ENCODE measurements at regions of chr5 and their contacts with region 1.

Region 1: DNA sequence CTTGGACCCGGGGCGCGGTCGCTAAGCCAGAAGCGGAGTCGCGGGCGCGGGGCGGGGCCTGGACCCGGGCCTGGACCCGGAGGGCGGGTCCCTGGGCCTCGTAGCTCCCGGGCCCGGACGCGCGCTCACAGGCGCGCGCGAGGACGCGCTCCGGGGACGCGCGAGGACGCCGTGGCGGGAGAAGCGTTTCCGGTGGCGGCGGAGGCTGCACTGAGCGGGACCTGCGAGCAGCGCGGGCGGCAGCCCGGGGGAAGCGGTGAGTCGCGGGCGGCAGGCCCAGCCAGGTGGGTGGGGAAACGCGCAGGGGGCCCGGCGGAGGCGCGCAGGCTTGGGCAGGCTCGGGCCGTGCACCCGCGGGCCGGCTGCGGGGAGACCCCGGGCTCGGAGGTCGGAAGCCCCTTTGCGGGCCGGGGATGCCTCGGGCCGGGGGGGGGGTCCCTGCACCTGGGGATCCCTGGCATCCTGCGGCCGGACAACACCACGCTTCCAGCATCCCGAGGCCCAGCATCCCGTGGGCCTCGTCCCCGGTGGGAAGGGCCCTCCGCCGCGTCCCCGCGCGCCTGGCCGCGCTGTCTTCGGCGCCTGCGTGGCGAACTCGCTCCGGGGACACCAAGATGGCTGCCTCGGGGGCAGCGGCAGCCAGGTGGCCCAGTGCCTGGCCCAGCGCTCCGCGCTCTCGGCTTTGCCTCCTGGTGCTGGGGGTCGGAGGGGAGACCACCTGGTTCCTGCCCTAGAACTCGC is at the start of gene SFXN1:
- DNase-seq: peak; percentile 70
- H3K4me3 ChIP-seq: peak within 1 kb of the TSS; percentile 51 to 81 (median 80)
- H3K27ac ChIP-seq: peak within 1 kb of the TSS; percentile 6
- H3K4me1 ChIP-seq: peaks cover 17% of the 10 kb centered on the region
- H3K27me3 ChIP-seq: peaks cover 0 to 3% of the 10 kb centered on the region in 2 experiments
- CTCF ChIP-seq: no peak
- POLR2A ChIP-seq: peak; percentile 61
- total RNA-seq, gene SFXN1: 69.3 and 77.3 TPM in 2 replicates

Region 2: GRCh38 chr5:174935854-174936474 is 542.6 kb before region 1 on chr5:
- CTCF ChIA-PET with region 1: no interaction called
- POLR2A ChIA-PET with region 1: no interaction called
- dilution Hi-C with region 1: no loop called
- intact Hi-C with region 1: no loop called
- DNase-seq: peak; percentile 14
- H3K4me3 ChIP-seq: no peak overlapping the region
- H3K27ac ChIP-seq: no peak overlapping the region
- H3K4me1 ChIP-seq: no peaks in the 10 kb centered on the region
- H3K27me3 ChIP-seq: no peaks in the 10 kb centered on the region
- CTCF ChIP-seq: peak; percentile 78 to 86
- POLR2A ChIP-seq: no peak

Region 3: DNA sequence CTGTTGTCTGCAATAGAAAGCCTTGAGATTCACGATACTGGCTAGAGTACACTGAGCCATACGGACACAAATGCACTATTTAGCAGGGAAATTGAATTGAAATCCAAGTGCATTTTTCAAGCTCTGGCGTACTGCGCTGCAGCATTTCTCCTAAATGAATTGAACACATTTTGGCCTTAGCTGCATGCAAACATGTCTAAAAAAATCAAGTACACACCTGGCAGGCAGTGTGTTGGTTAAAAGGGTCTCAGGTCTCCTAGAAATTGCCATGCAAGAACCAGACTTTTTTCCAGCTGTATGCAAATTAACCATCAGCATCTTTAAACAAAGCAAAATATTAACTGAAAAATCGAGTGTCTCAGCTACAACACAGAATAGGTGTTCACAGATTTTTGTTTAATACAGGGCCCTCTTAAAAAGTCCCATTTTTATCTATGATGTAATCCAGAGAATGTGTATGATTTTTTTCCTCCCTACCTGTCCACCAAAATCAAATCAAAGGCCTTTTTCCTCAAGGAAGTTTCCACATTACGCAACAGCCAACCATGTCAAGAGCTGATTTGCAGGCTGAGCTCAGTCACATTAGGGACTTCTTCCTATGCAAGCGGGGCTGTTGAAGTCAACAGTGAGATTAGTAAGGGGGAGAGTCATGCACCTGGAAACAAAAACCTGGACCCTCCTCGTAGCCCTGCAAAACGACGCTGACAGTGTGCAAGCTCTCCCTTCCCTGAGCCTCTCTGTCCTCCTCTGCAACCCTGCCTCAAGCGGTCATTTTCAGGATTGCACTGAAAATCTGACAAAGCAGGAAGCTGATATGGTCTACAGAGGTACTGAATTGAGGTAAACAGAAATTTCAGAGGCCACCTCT is 14.2 kb before region 1 on chr5:
- CTCF ChIA-PET with region 1: interaction called, 29 read pairs
- POLR2A ChIA-PET with region 1: no interaction called
- dilution Hi-C with region 1: no loop called
- intact Hi-C with region 1: no loop called
- DNase-seq: peak; percentile 37
- H3K4me3 ChIP-seq: no peak overlapping the region
- H3K27ac ChIP-seq: no peak overlapping the region
- H3K4me1 ChIP-seq: no peaks in the 10 kb centered on the region
- H3K27me3 ChIP-seq: peaks cover 0 to 1% of the 10 kb centered on the region in 2 experiments
- CTCF ChIP-seq: peak; percentile 45 to 62
- POLR2A ChIP-seq: no peak

Region 4: DNA sequence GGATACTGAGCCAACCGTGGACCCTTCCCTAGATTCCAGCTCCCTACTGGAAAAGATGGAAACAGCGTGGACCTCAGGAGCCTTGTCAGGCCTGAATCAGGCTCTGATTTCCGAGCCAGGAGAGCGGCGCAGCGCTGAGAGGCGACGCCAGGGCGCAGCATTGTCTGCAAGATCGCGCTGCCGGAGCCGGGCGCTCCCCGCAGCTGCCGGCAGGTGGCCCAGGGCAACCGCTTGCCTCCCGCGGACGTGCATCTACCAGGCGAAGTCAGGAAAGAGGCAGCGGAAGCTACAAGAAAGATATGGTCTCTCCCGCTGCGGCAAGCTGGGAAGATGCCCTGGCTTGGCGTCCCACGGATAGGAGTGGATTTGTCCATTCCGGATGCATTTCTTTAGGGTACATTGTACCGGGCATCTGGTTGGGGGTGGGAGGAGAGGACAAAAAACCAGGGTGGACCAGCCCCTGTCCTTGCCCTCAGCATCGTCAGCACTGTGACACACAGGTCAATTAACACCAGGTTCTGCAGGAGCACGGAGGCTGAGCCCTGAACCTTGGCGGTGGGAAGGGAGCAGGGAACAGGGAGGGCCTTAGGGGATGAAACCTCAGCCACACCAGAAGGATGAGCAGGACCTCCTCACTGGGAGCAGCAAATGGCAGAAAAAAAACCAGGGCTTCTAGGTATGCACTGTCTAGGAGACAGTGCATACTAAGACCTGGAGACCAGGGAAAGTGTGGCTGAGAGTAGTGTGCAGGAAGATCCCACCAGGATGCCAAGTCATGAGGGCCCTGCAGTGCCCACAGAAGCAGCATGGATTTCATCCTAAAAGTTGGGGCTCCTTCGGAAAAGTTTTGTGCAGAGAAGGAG is 55.7 kb after region 1 on chr5:
- CTCF ChIA-PET with region 1: interaction called, 4 read pairs
- POLR2A ChIA-PET with region 1: no interaction called
- dilution Hi-C with region 1: no loop called
- intact Hi-C with region 1: loop called (anchors 2 kb)
- DNase-seq: peak; percentile 69
- H3K4me3 ChIP-seq: no peak overlapping the region
- H3K27ac ChIP-seq: no peak overlapping the region
- H3K4me1 ChIP-seq: no peaks in the 10 kb centered on the region
- H3K27me3 ChIP-seq: no peaks in the 10 kb centered on the region
- CTCF ChIP-seq: peak; percentile 98
- POLR2A ChIP-seq: no peak